Mammary epithelial cell (primary cell): ENCODE measurements at regions of chr3 and their contacts with region 1.

Region 1: DNA sequence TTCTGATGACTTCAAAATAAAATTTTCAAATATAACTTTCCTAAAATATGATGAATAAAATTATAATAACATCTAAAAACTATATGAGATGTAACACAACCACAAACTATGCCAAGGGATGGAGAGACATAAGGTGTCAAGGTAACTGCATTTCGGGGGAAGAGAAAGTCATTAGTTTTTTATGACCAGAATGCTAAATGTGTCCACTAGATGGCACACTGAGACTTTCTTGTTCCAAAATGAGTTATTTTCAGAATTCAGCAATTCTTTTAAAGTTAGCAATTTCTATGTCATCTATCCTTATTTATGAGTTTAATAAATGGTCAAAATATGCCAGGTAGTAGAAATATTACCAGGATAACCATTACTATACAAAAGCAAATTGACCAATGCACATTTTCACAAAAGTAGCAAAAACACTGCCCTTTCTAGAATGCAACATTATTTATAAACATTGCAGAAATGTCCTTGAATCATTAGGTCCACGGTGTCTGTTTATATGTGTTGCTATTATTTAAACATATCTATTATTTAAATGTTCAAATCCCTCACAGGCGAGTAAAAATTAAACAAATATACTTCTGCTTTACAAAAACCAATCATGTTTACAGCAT is 374.2 kb downstream of the PLCL2 start:
- DNase-seq: peak; percentile 12
- H3K4me3 ChIP-seq: no peak overlapping the region
- H3K27ac ChIP-seq: no peak overlapping the region
- H3K4me1 ChIP-seq: no peaks in the 10 kb centered on the region
- H3K27me3 ChIP-seq: no peaks in the 10 kb centered on the region
- CTCF ChIP-seq: peak; percentile 66 to 70

Region 2: GRCh38 chr3:17290894-17291293 is 32.0 kb after region 1 on chr3:
- CTCF ChIA-PET with region 1: no interaction called
- dilution Hi-C with region 1: no loop called
- in situ Hi-C with region 1: no loop called
- intact Hi-C with region 1: no loop called
- DNase-seq: peak; percentile 54
- H3K4me3 ChIP-seq: no peak overlapping the region
- H3K27ac ChIP-seq: no peak overlapping the region
- H3K4me1 ChIP-seq: no peaks in the 10 kb centered on the region
- H3K27me3 ChIP-seq: no peaks in the 10 kb centered on the region
- CTCF ChIP-seq: no peak

Region 3: DNA sequence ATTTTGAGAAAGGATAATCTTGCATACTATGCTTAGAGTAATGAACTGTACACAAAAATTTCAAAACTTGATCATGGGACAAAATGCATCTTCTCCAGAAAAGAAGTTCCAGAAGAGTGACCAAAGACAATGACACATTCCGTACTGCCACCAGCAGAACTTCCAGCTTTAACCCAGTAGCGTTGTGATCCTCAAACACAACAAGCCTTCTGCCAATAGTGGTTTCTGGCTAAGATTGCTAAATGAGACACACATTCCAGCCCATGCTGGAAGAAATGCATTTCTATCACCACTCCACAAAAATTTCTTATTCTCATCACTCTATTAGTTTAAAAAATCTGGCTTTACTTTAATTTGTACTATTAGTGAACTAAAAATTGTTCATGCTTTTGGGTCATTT is 148.6 kb after region 1 on chr3:
- CTCF ChIA-PET with region 1: no interaction called
- dilution Hi-C with region 1: no loop called
- in situ Hi-C with region 1: loop called (anchors 10 kb)
- intact Hi-C with region 1: no loop called
- DNase-seq: no peak
- H3K4me3 ChIP-seq: no peak overlapping the region
- H3K27ac ChIP-seq: no peak overlapping the region
- H3K4me1 ChIP-seq: no peaks in the 10 kb centered on the region
- H3K27me3 ChIP-seq: no peaks in the 10 kb centered on the region
- CTCF ChIP-seq: no peak

Region 4: DNA sequence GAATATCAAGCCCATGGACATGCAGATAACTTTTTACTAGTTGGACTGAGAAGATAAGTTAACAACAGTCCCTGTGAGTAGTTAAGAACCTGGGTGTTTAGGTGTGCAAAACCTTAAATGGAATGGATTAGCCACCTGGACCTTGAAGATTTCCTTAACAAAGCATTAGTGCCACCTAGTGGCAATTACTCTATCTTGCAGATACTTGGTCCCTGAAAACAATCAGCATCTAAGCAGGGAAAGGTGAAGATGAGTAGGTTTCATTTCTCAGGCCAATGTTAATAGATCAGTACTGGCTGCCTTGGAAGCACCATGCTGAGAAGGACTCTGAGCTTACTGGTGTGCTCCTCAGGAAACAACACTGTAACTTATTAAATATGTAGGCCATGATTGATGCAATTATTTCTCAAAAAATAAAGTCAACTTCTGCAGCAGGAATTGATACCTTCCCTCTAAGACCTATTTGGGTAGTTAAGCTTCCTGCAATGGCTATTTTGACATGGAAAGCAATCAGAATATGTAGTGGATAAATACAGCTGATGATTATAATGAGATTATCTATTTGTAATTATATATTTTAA is 154.1 kb after region 1 on chr3:
- CTCF ChIA-PET with region 1: no interaction called
- dilution Hi-C with region 1: no loop called
- in situ Hi-C with region 1: loop called (anchors 10 kb)
- intact Hi-C with region 1: loop called (anchors 1 kb)
- DNase-seq: peak; percentile 58
- H3K4me3 ChIP-seq: no peak overlapping the region
- H3K27ac ChIP-seq: no peak overlapping the region
- H3K4me1 ChIP-seq: no peaks in the 10 kb centered on the region
- H3K27me3 ChIP-seq: no peaks in the 10 kb centered on the region
- CTCF ChIP-seq: peak; percentile 78 to 80

Region 5: GRCh38 chr3:17831366-17831765 is 572.4 kb after region 1 on chr3:
- CTCF ChIA-PET with region 1: no interaction called
- dilution Hi-C with region 1: no loop called
- in situ Hi-C with region 1: loop called in 1 of 2 experiments (anchors 25 kb)
- intact Hi-C with region 1: loop called (anchors 10 kb)
- DNase-seq: peak; percentile 53
- H3K4me3 ChIP-seq: no peak overlapping the region
- H3K27ac ChIP-seq: no peak overlapping the region
- H3K4me1 ChIP-seq: peaks cover 24% of the 10 kb centered on the region
- H3K27me3 ChIP-seq: no peaks in the 10 kb centered on the region
- CTCF ChIP-seq: no peak